ENCODE measurements at regions of chr2 and their contacts with region 1.

Region 1: GRCh38 chr2:230987137-230988020 is 8.5 kb upstream of the SPATA3 start:
- DNase-seq: peak; percentile 60
- H3K4me3 ChIP-seq: peak overlapping the region; percentile 10 to 24
- H3K27ac ChIP-seq: no peak overlapping the region
- H3K4me1 ChIP-seq: no peaks in the 10 kb centered on the region
- H3K27me3 ChIP-seq: peaks cover 9% of the 10 kb centered on the region
- CTCF ChIP-seq: peak; percentile 89 to 97 (median 92)
- POLR2A ChIP-seq: no peak

Region 2: GRCh38 chr2:230824406-230824978 is 162.9 kb before region 1 on chr2:
- intact Hi-C with region 1: loop called (anchors 2 kb)
- DNase-seq: peak; percentile 69
- H3K4me3 ChIP-seq: peak overlapping the region in 1 of 2 donors; percentile 14
- H3K27ac ChIP-seq: no peak overlapping the region
- H3K4me1 ChIP-seq: peaks cover 4% of the 10 kb centered on the region
- H3K27me3 ChIP-seq: no peaks in the 10 kb centered on the region
- CTCF ChIP-seq: peak in 3 of 4 experiments; percentile 68 to 78 (median 68)
- POLR2A ChIP-seq: no peak

Region 3: GRCh38 chr2:230847883-230848388 is 139.4 kb before region 1 on chr2:
- intact Hi-C with region 1: loop called (anchors 1 kb)
- DNase-seq: peak; percentile 71
- H3K4me3 ChIP-seq: no peak overlapping the region
- H3K27ac ChIP-seq: no peak overlapping the region
- H3K4me1 ChIP-seq: no peaks in the 10 kb centered on the region
- H3K27me3 ChIP-seq: no peaks in the 10 kb centered on the region
- CTCF ChIP-seq: peak; percentile 39 to 78 (median 72)
- POLR2A ChIP-seq: no peak

Region 4: GRCh38 chr2:230902180-230902899 is 85.0 kb before region 1 on chr2:
- intact Hi-C with region 1: loop called (anchors 2 kb)
- DNase-seq: no peak
- H3K4me3 ChIP-seq: no peak overlapping the region
- H3K27ac ChIP-seq: no peak overlapping the region
- H3K4me1 ChIP-seq: no peaks in the 10 kb centered on the region
- H3K27me3 ChIP-seq: no peaks in the 10 kb centered on the region
- CTCF ChIP-seq: peak in 2 of 4 experiments; percentile 39 to 50
- POLR2A ChIP-seq: no peak

Region 5: DNA sequence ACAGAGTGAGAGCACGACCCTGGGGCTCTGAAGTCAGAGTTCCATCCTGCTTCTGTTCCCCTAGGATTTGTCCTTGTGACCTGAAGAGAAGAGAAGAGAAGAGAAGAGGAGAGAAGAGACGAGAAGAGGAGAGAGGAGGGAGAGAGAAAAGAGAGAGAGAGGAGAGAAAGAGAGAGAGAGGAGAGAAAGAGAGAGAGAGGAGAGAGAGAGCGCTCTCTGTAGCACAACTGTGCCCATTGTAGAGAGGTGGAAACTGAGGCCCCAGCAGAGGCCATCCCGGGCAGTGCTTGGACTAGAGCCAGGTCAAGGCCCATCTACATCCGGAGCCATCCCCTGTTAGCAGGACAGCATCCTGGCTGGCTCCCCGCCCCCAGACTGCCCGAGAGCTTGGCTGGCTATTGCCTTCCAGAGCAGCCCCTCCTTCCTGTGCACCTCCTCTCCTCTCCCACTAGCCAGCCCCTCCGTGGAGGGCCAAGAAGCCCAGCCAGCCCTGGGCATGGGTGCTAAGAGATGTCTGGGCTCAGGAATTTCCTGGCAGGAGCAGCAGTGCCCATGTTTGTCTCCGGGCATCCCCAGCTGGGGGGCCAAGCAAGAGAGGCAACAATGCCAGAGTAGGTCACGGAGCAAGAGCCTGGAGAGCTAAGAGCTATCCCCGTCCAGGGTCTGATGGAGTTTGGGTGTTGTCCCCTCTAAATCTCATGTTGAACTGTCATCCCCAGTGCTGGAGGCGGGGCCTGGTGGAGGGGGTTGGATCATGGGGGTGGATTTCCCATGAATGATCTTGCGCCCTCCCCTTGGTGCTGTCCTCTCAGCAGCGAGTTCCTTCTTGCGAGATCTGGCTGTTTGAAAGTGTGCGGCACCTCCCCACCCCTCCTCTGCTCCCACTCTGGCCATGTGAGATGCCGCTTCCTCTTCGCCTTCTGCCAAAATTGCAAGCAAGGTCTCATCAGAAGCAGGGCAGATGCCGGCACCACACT is 44.2 kb before region 1 on chr2:
- intact Hi-C with region 1: no loop called
- DNase-seq: no peak
- H3K4me3 ChIP-seq: no peak overlapping the region
- H3K27ac ChIP-seq: no peak overlapping the region
- H3K4me1 ChIP-seq: no peaks in the 10 kb centered on the region
- H3K27me3 ChIP-seq: no peaks in the 10 kb centered on the region
- CTCF ChIP-seq: no peak
- POLR2A ChIP-seq: no peak